ENCODE measurements at regions of chr17 and their contacts with region 1.

Region 1: DNA sequence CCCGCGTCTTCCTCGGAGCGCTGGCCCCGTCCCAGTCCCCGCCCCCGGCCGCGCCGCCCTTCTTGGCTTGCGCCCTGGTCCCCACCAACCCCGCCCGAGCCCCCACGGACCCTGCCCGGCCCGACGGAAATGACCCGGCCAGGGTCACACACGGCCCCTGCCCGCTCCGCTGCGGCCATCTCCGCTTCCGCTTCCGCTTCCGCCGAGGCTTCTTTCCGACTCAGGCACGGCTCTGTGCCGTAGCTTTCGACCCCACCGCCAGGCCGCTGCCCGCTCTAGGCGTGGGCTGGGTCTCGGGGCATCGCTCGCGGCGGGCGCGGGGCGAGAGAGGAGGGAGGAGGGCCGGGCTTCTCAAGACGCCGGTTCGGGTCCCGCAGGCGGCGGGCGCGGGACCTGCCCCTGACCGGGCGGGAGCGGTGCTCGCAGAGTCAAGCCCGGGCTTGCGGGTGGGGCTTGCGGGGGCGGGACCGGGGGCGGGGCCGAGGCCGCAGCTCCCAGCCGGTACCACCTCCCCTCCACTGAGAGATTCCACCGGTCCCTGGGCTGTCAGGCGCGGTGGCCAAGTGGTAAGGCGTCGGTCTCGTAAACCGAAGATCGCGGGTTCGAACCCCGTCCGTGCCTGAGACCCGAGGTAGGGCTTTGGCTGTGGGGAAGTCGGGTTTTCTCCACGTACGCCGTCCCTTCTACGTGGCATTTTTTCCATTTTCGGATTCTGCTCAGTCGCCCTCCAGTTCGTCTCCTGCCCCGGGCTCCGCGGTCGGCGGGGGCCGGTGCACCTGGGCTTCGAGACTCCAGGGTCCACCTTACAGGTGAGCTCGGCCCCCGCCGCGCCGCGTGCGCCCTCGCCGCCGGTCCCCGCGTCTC is 158.3 kb downstream of the RAB11FIP4 start:
- DNase-seq: peak; percentile 88
- H3K4me3 Mint-ChIP-seq: peak overlapping the region; percentile 84
- H3K27ac Mint-ChIP-seq: peak overlapping the region; percentile 32
- H3K4me1 Mint-ChIP-seq: peaks cover 17% of the 10 kb centered on the region
- H3K27me3 Mint-ChIP-seq: no peaks in the 10 kb centered on the region
- CTCF ChIP-seq: no peak

Region 2: DNA sequence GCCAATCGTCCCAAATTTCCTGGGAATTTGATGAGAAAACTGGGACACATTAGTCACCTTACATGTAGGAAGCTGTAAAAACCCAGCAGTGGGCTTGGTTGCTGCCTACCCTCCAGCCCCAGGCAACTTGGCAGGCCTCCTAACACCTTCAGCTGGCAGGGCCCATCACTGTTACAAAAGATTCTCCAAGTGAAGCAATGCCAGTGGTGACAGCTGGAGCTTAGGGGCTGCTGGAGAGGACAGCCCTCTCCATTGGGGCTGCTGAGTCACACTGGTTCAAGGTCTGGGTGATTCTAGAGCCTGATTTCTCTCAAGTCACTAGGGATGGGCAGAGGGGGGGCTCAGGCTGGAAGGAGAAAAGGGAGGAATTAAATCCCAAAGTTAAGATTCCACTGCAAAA is 128.7 kb after region 1 on chr17:
- CTCF ChIA-PET with region 1: no interaction called
- POLR2A ChIA-PET with region 1: no interaction called
- intact Hi-C with region 1: loop called (anchors 10 kb)
- DNase-seq: peak; percentile 83
- H3K4me3 Mint-ChIP-seq: no peak overlapping the region
- H3K27ac Mint-ChIP-seq: no peak overlapping the region
- H3K4me1 Mint-ChIP-seq: peaks cover 30% of the 10 kb centered on the region
- H3K27me3 Mint-ChIP-seq: no peaks in the 10 kb centered on the region
- CTCF ChIP-seq: no peak